Left cardiac atrium (tissue), 4 donors: ENCODE measurements at regions of chr7 and their contacts with region 1.

Region 1: GRCh38 chr7:9785211-9785610 is 1188.5 kb upstream of the PHF14 start:
- DNase-seq: no peak
- ATAC-seq: no peak

Region 2: DNA sequence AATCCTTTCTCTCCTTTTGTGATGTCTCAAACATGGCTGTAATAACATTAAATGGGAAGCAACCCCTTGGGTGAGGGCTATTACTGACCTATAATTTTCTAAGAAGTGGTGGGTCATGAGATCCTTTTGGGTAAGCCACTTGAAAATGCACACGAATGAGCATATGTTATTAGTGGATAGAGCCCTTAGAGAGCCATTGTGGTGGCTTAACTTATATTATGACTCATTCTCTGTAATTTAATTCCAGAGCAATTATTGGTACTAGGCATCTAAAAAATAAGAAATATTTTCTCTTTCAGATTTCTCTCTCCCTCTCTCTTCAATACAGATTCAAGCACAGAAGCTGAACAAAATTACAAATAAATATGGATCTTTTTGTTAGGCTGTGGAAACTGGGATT is 11.0 kb after region 1 on chr7:
- intact Hi-C with region 1: loop called in 1 of 2 experiments (anchors 1 kb)
- DNase-seq: no peak
- ATAC-seq: no peak

Region 3: DNA sequence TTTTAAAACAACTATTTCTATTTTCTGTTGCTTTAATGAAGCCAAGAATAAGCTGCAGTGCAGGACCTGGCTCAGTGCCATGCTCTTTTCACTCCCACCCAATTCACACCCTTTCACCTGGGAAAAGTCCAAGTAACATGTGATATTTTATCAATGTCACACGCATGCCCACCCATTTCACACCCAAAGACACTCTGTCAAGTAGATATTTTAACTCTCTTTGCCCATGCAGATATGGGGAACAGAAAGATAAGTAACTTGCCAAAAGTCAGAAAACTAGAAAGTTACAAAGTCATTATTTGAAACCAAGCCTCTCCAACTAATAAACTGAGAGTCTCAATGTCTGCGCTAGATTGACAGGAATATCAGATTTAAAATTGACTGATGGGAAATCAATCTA is 481.8 kb after region 1 on chr7:
- intact Hi-C with region 1: no loop called
- DNase-seq: no peak
- ATAC-seq: no peak